GM18951 (cell line): ENCODE measurements at regions of chr17 and their contacts with region 1.

Region 1: GRCh38 chr17:31967648-31968047 is 30.8 kb downstream of the SUZ12 start:
- POLR2A ChIP-seq: no peak

Region 2: DNA sequence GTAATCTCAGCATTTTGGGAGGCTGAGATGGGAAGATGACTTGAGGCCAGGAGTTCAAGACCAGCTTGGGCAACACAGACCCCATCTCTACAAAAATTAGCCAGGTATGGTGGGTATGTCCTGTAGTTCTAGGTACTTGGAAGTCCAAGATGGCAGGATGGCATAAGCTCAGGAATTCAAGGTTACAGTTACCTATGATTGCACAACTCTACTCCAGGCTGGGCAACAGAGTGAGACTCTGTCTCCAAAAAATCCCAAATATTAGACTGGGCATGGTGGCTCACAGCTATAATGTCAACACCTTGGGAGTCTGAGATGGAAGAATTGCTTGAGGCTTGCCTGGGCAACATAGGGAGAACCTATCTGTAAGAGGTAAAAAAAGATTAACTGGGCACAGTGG is 1206.6 kb before region 1 on chr17:
- in situ Hi-C with region 1: loop called (anchors 5 kb)
- POLR2A ChIP-seq: no peak

Region 3: GRCh38 chr17:31549525-31550388 is 417.9 kb before region 1 on chr17:
- in situ Hi-C with region 1: no loop called
- POLR2A ChIP-seq: peak; percentile 78

Region 4: DNA sequence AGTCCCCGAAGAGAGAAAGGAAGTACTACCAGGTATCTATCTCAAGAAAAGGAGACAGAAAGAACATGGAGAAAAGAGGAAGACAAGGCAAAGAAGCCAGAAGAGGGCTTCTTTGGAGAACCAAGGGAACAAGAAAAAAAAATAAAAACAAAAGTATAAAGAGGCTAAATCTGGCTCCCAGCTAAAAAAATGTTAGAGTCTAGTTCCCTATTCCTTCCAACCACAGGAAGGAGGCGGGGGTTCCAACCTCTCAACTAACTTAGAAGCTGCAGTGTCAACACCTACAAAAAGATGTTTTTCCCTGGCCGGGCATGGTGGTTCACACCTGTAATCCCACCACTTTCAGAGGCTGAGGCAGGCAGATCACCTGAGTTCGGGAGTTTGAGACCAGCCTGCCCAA is 79.5 kb before region 1 on chr17:
- in situ Hi-C with region 1: no loop called
- POLR2A ChIP-seq: no peak